ENCODE measurements at regions of chr10 and their contacts with region 1.

Region 1: DNA sequence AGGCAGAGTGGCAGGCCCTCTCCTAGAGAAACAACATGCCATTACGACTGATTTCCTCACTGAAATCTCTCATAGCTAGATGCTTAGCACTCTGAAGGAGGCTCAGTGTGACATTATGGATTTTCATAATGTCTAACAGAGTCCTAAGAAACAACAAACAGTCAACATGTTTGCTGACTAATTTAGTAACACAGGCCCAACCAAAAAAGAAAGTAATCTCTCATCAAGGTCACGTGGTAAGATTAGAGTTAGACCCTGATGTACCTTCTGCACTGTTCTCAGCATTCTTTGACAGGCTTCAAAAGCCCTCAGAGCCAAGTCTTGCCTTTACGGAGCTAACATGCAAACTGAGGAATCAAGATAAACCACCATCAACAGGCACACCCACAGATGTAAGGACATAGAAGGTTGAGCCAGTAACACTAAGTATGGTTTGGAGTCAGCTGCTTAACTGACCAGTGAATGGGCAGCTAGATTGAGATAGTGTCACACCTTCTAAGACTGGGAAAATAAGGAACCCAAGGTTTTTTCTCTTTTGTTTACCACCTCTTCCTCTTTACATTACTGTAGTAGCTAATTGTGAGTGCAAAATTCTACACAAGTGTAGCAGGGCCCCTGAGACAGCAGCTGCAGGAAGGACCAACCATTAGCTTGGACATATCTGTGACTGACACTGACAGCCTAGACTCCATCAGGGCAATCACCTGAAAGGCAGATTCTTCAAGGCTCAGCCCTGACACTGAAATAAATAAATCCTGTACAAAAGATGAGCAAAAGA is 15.3 kb upstream of the KCNIP2 start:
- DNase-seq: no peak

Region 2: DNA sequence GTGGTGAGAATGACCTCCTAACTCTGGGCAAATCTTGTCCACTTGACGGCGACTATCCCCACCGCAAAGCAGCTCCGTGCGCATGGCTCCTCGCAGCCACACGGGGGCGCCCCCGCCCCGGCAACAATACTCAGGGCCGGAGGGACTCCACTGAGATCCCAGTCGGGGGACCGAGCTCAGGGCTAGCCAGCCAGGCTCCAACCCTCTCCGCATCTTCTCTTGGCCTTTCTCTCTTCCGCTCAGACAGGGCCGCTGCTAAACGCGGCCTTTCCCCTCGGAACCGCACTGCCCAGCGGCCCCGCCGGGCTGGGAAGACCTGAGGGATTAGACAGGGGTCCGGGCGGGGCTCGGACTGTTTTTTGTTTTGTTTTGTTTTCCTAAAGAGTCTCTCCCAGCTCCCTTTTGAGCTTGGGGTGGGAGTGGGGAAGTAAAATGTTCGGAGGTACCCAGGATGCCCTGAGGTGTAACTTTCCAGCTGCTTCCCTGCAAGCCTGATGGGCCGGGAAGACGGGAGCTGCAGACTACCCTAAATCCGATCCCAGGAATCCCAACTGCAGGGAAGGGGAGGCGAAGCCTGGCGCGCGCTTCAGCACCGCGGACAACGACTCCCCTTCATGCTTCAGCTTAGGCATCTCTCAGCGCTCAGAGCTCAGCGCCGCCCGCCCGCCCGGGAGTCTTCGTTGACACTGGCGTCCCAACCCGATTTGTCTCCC is 18.0 kb before region 1 on chr10:
- CTCF ChIA-PET with region 1: interaction called, 13 read pairs
- POLR2A ChIA-PET with region 1: no interaction called
- DNase-seq: peak; percentile 95

Measured in HEK293T (cell line).